ENCODE measurements at regions of chrX and their contacts with region 1.

Region 1: DNA sequence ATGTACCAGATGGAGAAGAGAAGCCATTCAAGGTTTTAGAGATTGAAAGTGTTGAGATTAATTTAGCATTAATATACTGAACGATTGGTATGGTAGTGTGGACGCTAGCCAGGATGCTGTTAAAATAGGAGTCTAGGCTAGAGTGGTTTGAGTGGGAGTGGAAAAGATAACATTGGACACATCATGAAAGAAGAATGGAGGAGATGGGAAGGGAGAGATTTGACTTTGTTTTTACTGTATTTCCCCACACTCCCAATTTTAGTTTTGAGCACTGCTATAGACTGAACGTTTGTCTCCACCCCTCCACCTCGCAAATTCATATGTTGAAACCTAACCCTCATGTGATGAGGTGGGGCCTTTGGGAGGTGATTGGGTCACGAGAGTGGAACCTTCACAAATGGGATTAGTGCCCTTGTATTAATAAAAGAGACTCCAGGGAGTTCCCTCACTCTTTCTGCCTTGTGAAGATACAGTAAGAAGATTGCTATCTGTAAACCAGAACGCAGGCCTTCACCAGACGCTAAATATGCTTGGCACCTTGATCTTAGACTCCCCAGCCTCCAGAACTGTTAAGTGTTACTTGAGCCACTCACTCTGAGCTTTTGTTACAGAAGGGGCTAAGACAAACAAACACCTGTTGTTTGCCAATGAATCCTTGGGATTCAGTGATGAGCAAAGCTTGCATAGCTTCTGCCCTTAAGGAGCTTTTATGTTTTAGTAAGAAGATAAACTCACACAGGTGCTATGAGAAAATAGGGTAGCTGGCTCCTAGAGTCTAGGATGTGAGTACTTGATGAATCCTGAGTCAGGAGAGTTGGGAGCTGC is 25.8 kb downstream of the USP9X start:
- DNase-seq: peak in 1 of 4 experiments; percentile 13
- ATAC-seq: peak; percentile 50
- H3K4me3 ChIP-seq: no peak overlapping the region
- H3K27ac ChIP-seq: no peak overlapping the region
- H3K4me1 ChIP-seq: peaks cover 13 to 25% of the 10 kb centered on the region in 2 experiments; a peak in 4 of 5 replicates
- H3K27me3 ChIP-seq: no peaks in the 10 kb centered on the region
- CTCF ChIP-seq: no peak
- EP300 ChIP-seq: no peak
- POLR2A ChIP-seq: no peak
- RAD21 ChIP-seq: no peak

Region 2: GRCh38 chrX:41045960-41046567 is 64.9 kb before region 1 on chrX:
- CTCF ChIA-PET with region 1: no interaction called
- POLR2A ChIA-PET with region 1: no interaction called
- in situ Hi-C with region 1: no loop called
- intact Hi-C with region 1: loop called (anchors 5 kb)
- DNase-seq: peak in 1 of 4 experiments; percentile 32
- ATAC-seq: peak; percentile 60
- H3K4me3 ChIP-seq: no peak overlapping the region
- H3K27ac ChIP-seq: peak overlapping the region; percentile 85; the same call in 2 of the 3 replicates
- H3K4me1 ChIP-seq: peaks cover 0 to 6% of the 10 kb centered on the region in 2 experiments; a peak in 3 of 5 replicates
- H3K27me3 ChIP-seq: no peaks in the 10 kb centered on the region
- CTCF ChIP-seq: no peak
- EP300 ChIP-seq: no peak
- POLR2A ChIP-seq: no peak
- RAD21 ChIP-seq: no peak

Region 3: GRCh38 chrX:41067721-41068120 is 43.3 kb before region 1 on chrX:
- CTCF ChIA-PET with region 1: no interaction called
- POLR2A ChIA-PET with region 1: no interaction called
- in situ Hi-C with region 1: no loop called
- intact Hi-C with region 1: no loop called
- DNase-seq: peak in 2 of 4 experiments; percentile 8 to 60
- ATAC-seq: peak; percentile 73
- H3K4me3 ChIP-seq: no peak overlapping the region
- H3K27ac ChIP-seq: peak overlapping the region; percentile 44
- H3K4me1 ChIP-seq: peaks cover 0 to 10% of the 10 kb centered on the region in 2 experiments; a peak in 3 of 5 replicates
- H3K27me3 ChIP-seq: no peaks in the 10 kb centered on the region
- CTCF ChIP-seq: no peak
- EP300 ChIP-seq: no peak
- POLR2A ChIP-seq: no peak
- RAD21 ChIP-seq: no peak

Region 4: GRCh38 chrX:41096339-41096955 is 14.6 kb before region 1 on chrX:
- CTCF ChIA-PET with region 1: no interaction called
- POLR2A ChIA-PET with region 1: interaction called, 11 read pairs
- in situ Hi-C with region 1: no loop called
- intact Hi-C with region 1: no loop called
- DNase-seq: no peak
- ATAC-seq: peak; percentile 51
- H3K4me3 ChIP-seq: no peak overlapping the region
- H3K27ac ChIP-seq: no peak overlapping the region
- H3K4me1 ChIP-seq: peaks cover 0 to 14% of the 10 kb centered on the region in 2 experiments; a peak in 3 of 5 replicates
- H3K27me3 ChIP-seq: no peaks in the 10 kb centered on the region
- CTCF ChIP-seq: no peak
- EP300 ChIP-seq: no peak
- POLR2A ChIP-seq: no peak
- RAD21 ChIP-seq: no peak

Measured in K562 (cell line).